Thyroid gland (tissue), 4 donors: ENCODE measurements at regions of chr11 and their contacts with region 1.

Region 1: GRCh38 chr11:100676901-100677300 is 10.2 kb upstream of the ARHGAP42 start:
- DNase-seq: no peak
- H3K4me3 ChIP-seq: no peak overlapping the region
- H3K27ac ChIP-seq: no peak overlapping the region
- H3K4me1 ChIP-seq: no peaks in the 10 kb centered on the region
- H3K27me3 ChIP-seq: no peaks in the 10 kb centered on the region
- CTCF ChIP-seq: no peak
- POLR2A ChIP-seq: no peak

Region 2: GRCh38 chr11:100581318-100581717 is 95.6 kb before region 1 on chr11:
- intact Hi-C with region 1: loop called (anchors 10 kb)
- DNase-seq: no peak
- H3K4me3 ChIP-seq: no peak overlapping the region
- H3K27ac ChIP-seq: no peak overlapping the region
- H3K4me1 ChIP-seq: no peaks in the 10 kb centered on the region
- H3K27me3 ChIP-seq: no peaks in the 10 kb centered on the region
- CTCF ChIP-seq: no peak
- POLR2A ChIP-seq: no peak

Region 3: GRCh38 chr11:100753172-100753543 is 76.3 kb after region 1 on chr11:
- intact Hi-C with region 1: no loop called
- DNase-seq: peak in 1 of 2 donors; percentile 19
- H3K4me3 ChIP-seq: no peak overlapping the region
- H3K27ac ChIP-seq: no peak overlapping the region
- H3K4me1 ChIP-seq: peaks cover 0 to 14% of the 10 kb centered on the region in 2 donors
- H3K27me3 ChIP-seq: no peaks in the 10 kb centered on the region
- CTCF ChIP-seq: no peak
- POLR2A ChIP-seq: no peak